Breast epithelium (tissue), 4 donors: ENCODE measurements at regions of chr11 and their contacts with region 1.

Region 1: DNA sequence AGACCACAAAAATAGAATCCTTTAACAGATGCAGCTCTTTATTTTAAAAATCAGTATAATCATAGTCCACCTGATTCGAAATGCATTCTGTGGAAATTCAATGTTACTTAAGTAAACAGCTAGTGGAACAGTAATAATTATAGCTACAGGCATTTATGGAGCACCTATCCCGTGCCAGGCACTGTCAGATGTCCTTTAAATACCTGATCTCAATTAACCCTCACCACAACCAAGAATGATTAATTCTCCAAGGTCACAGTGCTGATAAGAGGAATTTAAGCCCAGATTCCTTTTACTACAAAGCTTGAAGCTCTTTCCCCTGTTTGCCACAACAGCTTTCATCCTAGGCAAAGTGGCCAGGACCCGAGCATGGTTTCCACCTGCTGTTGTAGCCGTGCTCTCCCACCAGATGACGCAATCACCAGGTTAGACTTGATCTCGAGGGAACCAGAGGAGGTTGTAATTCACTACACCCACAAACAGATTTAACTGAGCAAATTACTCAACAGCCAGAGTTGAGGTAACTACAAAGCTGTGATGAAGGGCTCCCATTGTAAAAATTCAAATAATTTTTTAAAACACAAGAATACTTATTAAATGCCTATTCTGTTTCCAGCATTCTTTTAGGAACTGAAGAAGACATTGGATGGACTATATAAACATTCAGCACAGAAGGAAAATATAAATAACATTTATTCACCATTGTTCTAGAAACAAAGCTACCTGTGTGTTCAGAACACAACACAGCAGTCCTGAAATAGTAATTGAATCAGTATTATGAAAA is 10.3 kb downstream of the PRDM10 start:
- DNase-seq: peak in 1 of 2 donors; percentile 35
- H3K4me3 ChIP-seq: no peak overlapping the region
- H3K27ac ChIP-seq: peak overlapping the region in 1 of 2 donors; percentile 51
- H3K4me1 ChIP-seq: no peaks in the 10 kb centered on the region
- H3K27me3 ChIP-seq: no peaks in the 10 kb centered on the region
- CTCF ChIP-seq: peak in 1 of 3 donors; percentile 51
- POLR2A ChIP-seq: no peak

Region 2: DNA sequence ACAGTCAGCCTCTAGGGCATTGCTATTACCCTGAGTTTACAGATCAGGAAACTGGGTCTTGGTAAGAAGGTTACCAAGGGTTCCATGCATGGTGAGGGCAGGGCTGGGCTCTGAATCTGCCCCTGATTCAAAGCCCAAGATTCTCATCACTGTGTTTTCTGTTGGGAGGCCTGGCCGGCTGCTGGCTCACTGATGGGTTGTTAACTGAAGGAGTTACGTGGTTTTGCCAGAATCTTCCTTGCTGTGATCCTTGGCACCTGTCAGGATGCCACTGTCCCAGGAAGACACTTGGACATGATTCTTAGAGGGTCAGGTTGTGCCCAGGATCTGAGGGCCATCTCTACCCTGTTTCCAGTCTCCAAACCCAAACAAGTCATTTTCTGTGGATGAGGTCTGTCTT is 517.6 kb after region 1 on chr11:
- intact Hi-C with region 1: loop called (anchors 5 kb)
- DNase-seq: no peak
- H3K4me3 ChIP-seq: no peak overlapping the region
- H3K27ac ChIP-seq: peak overlapping the region; percentile 68 to 81
- H3K4me1 ChIP-seq: no peaks in the 10 kb centered on the region
- H3K27me3 ChIP-seq: no peaks in the 10 kb centered on the region
- CTCF ChIP-seq: no peak
- POLR2A ChIP-seq: no peak